ENCODE measurements at regions of chr16 and their contacts with region 1.

Region 1: GRCh38 chr16:87062569-87063442 is 254.4 kb downstream of the C16orf95 start:
- DNase-seq: no peak
- H3K4me3 ChIP-seq: peak overlapping the region; percentile 34
- CTCF ChIP-seq: peak; percentile 81

Region 2: GRCh38 chr16:86664533-86665318 is 398.1 kb before region 1 on chr16:
- CTCF ChIA-PET with region 1: interaction called, 10 read pairs
- POLR2A ChIA-PET with region 1: no interaction called
- DNase-seq: peak; percentile 83
- H3K4me3 ChIP-seq: peak overlapping the region; percentile 34
- CTCF ChIP-seq: no peak

Region 3: GRCh38 chr16:86834451-86835035 is 228.3 kb before region 1 on chr16:
- CTCF ChIA-PET with region 1: interaction called, 17 read pairs
- POLR2A ChIA-PET with region 1: no interaction called
- DNase-seq: peak; percentile 71
- H3K4me3 ChIP-seq: no peak overlapping the region
- CTCF ChIP-seq: peak; percentile 54

Region 4: DNA sequence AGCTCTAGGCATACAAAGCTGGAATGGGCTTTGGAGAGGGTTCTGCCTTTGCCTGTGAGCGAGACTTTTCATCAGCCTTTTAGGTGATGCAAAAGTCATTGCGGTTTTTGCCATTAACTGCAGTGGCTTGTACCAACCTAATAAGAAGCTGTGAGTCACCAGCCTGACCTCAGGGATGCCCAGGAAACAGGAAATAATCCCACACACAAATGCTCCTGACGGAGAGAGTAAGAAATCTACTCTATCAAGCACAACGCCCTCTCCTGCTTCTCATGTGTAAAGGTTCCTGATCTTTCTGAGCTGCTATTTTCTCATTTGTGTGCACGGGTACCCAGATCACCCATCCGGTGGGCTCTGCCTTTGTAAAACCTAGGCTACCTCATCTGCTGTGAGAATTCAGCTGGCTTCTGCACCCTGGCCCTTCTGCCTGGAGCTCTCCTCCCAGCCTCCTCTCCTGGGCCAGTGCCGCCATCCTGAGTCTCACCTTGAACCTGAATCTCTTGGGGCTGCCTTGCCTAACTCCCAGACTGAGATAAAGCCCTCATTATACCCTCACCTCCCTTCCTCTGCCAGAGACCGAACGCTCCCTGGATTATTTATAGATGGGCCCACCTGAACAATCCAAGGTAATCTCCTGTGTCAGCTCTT is 45.3 kb before region 1 on chr16:
- CTCF ChIA-PET with region 1: interaction called, 18 read pairs
- POLR2A ChIA-PET with region 1: no interaction called
- DNase-seq: peak; percentile 71
- H3K4me3 ChIP-seq: no peak overlapping the region
- CTCF ChIP-seq: peak; percentile 63

Region 5: DNA sequence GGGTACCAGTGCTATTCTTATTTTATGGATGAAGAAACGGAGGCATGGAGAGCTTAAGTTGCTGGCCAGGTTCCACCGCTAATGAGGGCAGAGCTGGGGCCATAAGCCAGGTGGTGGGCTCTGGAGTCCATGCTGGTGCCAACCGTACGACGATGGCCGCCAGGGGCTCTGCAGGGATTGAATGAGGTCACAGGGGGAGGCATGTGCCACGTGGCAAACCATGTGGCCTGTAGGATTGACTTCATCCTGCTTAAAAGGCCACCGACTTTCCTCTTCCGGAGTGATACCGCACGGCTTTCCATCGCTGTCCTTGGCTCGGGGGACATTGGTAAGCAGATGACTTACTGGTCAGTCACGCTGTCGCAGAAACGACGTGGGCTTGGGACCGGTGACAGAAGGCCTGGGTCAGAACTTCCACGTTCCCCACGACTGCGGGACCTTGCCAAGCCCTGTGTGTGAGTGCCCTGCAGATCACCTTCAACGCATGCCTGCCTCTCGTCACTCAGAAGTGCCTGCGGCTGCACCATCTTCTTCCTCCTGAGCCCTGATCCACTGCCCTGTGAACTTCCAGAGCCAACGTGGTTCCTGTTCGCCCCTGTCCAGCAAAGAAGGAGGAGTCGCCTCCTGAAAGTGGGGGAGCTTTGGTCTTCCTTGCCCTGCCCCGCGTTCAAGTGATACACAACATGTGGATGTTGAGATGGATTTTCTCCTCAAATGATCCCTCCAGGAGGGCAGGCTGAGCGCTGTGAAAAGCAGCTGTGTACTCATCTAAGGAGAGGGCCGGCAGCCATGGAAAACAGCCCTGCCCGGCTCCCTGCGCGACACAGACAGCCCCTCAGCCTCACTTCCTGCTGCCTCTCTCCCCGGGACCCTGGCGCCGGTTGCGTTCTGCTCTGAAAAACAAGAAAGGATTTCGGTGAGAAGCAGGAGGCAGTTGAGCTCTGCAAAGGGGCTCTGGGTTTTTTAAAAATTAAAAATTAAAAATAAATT is 77.7 kb after region 1 on chr16:
- CTCF ChIA-PET with region 1: interaction called, 11 read pairs
- POLR2A ChIA-PET with region 1: no interaction called
- DNase-seq: no peak
- H3K4me3 ChIP-seq: no peak overlapping the region
- CTCF ChIP-seq: no peak